Naive thymus-derived CD4-positive, alpha-beta T cell (primary cell): ENCODE measurements at regions of chr4 and their contacts with region 1.

Region 1: GRCh38 chr4:59247032-59247431 is 1953.1 kb upstream of the ADGRL3 start:
- DNase-seq: no peak
- ATAC-seq: no peak
- H3K4me3 ChIP-seq: no peak overlapping the region
- H3K4me3 Mint-ChIP-seq: no peak overlapping the region
- H3K27ac ChIP-seq: no peak overlapping the region
- H3K27ac Mint-ChIP-seq: no peak overlapping the region
- H3K4me1 ChIP-seq: no peaks in the 10 kb centered on the region
- H3K4me1 Mint-ChIP-seq: peaks cover 0 to 1% (median 0%) of the 10 kb centered on the region in 7 donors
- H3K27me3 ChIP-seq: no peaks in the 10 kb centered on the region
- H3K27me3 Mint-ChIP-seq: no peaks in the 10 kb centered on the region

Region 2: DNA sequence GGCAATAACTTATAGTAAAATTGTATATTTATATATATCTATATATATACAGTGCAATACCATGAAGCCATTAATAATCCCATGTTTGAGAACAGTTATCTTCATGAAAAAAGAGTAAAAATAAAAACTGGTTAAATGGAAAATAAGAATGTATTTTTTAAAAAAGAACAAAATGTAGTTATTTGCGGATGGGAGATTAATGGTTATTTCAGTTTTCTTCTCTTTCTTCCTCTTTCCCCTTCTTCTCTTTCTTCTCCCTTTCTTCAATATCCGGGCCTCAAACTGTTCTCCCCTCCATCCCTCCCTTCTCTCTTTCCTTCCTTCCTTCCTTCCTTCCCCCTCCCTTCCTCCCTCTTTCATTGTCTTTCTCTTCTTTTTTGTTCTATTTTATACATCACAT is 835.1 kb before region 1 on chr4:
- CTCF ChIA-PET with region 1: no interaction called
- POLR2A ChIA-PET with region 1: no interaction called
- intact Hi-C with region 1: no loop called
- DNase-seq: no peak
- ATAC-seq: no peak
- H3K4me3 ChIP-seq: no peak overlapping the region
- H3K4me3 Mint-ChIP-seq: no peak overlapping the region
- H3K27ac ChIP-seq: no peak overlapping the region
- H3K27ac Mint-ChIP-seq: no peak overlapping the region
- H3K4me1 ChIP-seq: no peaks in the 10 kb centered on the region
- H3K4me1 Mint-ChIP-seq: no peaks in the 10 kb centered on the region
- H3K27me3 ChIP-seq: no peaks in the 10 kb centered on the region
- H3K27me3 Mint-ChIP-seq: no peaks in the 10 kb centered on the region

Region 3: DNA sequence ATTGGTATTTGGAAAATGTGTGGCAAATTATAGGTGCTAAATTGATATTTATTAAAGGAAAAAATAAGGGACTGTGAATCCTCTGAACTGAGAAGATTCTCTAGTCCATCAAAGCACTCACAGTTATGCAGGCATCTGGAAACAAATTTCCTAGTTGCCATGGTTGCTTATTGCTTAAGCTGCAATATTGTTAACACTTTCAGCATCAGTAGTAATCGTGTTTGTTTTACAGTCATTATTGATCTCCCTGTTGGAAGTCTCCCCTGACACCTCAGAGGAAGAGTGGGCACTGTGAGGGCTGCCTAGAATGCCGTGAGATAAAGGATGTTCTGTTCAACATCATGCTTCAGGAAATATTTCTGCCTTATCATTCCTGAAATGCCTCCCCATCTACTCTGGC is 51.2 kb before region 1 on chr4:
- CTCF ChIA-PET with region 1: no interaction called
- POLR2A ChIA-PET with region 1: no interaction called
- intact Hi-C with region 1: no loop called
- DNase-seq: no peak
- ATAC-seq: no peak
- H3K4me3 ChIP-seq: no peak overlapping the region
- H3K4me3 Mint-ChIP-seq: no peak overlapping the region
- H3K27ac ChIP-seq: no peak overlapping the region
- H3K27ac Mint-ChIP-seq: no peak overlapping the region
- H3K4me1 ChIP-seq: no peaks in the 10 kb centered on the region
- H3K4me1 Mint-ChIP-seq: no peaks in the 10 kb centered on the region
- H3K27me3 ChIP-seq: no peaks in the 10 kb centered on the region
- H3K27me3 Mint-ChIP-seq: no peaks in the 10 kb centered on the region

Region 4: DNA sequence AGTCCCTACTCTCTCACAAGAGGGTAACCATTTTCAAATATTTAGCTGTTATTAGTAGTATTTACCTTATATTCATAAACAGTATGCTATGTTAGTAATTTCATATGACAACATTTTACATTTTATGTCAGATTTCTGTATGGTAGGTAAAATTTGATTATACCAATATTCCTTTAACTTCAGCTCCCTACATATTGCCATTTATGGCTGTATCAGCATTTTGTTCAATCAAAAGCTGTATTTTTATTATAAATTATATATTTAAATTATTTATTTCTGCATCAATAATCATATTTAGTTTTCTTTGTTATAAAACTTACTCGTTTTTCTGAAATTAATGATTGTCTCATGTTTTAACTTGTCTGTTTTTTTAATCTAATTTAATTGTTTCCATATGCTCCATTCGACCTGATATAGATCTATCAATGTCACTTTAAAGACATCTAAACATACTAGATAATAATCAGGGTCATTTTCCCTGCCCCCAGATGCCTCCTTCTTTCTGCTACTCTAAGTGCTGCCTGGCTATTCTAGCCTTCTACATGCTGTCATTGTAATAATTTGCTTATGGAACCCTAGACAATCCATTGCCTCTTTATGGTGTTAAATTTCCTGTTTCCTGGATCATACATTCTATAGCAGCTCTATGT is 23.6 kb before region 1 on chr4:
- CTCF ChIA-PET with region 1: no interaction called
- POLR2A ChIA-PET with region 1: no interaction called
- intact Hi-C with region 1: no loop called
- DNase-seq: no peak
- ATAC-seq: no peak
- H3K4me3 ChIP-seq: no peak overlapping the region
- H3K4me3 Mint-ChIP-seq: no peak overlapping the region
- H3K27ac ChIP-seq: no peak overlapping the region
- H3K27ac Mint-ChIP-seq: no peak overlapping the region
- H3K4me1 ChIP-seq: no peaks in the 10 kb centered on the region
- H3K4me1 Mint-ChIP-seq: no peaks in the 10 kb centered on the region
- H3K27me3 ChIP-seq: no peaks in the 10 kb centered on the region
- H3K27me3 Mint-ChIP-seq: no peaks in the 10 kb centered on the region

Region 5: GRCh38 chr4:60201057-60201673 is 954.1 kb after region 1 on chr4:
- CTCF ChIA-PET with region 1: no interaction called
- POLR2A ChIA-PET with region 1: no interaction called
- intact Hi-C with region 1: loop called in 1 of 2 experiments (anchors 5 kb)
- DNase-seq: peak in 2 of 9 donors; percentile 8
- ATAC-seq: peak; percentile 34
- H3K4me3 ChIP-seq: no peak overlapping the region
- H3K4me3 Mint-ChIP-seq: no peak overlapping the region
- H3K27ac ChIP-seq: no peak overlapping the region
- H3K27ac Mint-ChIP-seq: no peak overlapping the region
- H3K4me1 ChIP-seq: no peaks in the 10 kb centered on the region
- H3K4me1 Mint-ChIP-seq: no peaks in the 10 kb centered on the region
- H3K27me3 ChIP-seq: no peaks in the 10 kb centered on the region
- H3K27me3 Mint-ChIP-seq: no peaks in the 10 kb centered on the region